Right cardiac atrium (tissue), 5 donors: ENCODE measurements at regions of chr10 and their contacts with region 1.

Region 1: GRCh38 chr10:82796510-82796909 is 921.5 kb downstream of the NRG3 start:
- DNase-seq: no peak
- ATAC-seq: no peak
- H3K4me3 ChIP-seq: no peak overlapping the region
- H3K27ac ChIP-seq: no peak overlapping the region
- H3K4me1 ChIP-seq: no peaks in the 10 kb centered on the region
- H3K27me3 ChIP-seq: no peaks in the 10 kb centered on the region

Region 2: DNA sequence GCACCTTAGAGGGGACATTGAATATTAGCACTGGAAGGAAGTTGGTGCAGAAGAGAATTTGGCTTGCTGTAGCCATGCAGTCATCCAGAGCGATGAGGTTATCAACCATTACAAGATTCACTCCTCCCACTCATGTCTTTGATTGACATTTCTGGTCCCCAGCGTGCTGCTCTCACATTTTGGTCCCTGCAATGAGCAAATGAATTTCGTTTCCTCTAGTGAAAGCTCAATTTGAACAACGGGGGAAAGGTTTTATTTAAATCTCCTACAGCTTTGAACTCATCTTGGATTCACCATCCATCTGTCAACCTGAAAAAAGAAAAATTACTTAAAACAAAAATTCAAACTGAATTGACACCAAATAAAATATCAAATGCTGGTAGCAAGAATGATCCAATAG is 53.7 kb after region 1 on chr10:
- intact Hi-C with region 1: no loop called
- DNase-seq: no peak
- ATAC-seq: no peak
- H3K4me3 ChIP-seq: no peak overlapping the region
- H3K27ac ChIP-seq: no peak overlapping the region
- H3K4me1 ChIP-seq: no peaks in the 10 kb centered on the region
- H3K27me3 ChIP-seq: no peaks in the 10 kb centered on the region

Region 3: DNA sequence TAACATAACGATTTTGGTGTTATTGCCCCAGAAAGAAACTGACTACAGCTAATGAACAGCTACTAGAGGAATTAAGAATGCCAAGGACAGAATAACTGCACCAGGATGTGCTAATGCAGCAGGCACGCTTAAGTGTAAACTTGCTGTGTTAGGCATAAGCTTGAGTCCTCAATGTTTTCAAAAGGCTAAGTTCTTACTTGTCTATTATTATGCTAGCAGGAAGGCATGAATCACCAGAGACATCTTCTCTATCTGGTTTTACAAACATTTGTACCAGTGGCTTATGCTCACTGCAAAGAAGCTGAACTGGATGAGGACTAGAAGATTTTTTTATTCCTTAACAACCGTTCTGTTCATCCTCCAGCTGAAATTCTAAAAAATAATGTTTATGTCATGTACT is 113.8 kb after region 1 on chr10:
- intact Hi-C with region 1: no loop called
- DNase-seq: no peak
- ATAC-seq: no peak
- H3K4me3 ChIP-seq: no peak overlapping the region
- H3K27ac ChIP-seq: no peak overlapping the region
- H3K4me1 ChIP-seq: no peaks in the 10 kb centered on the region
- H3K27me3 ChIP-seq: no peaks in the 10 kb centered on the region

Region 4: GRCh38 chr10:83871187-83872081 is 1074.9 kb after region 1 on chr10:
- intact Hi-C with region 1: loop called in 2 of 4 experiments (anchors 5 to 10 kb)
- DNase-seq: peak; percentile 69 to 77 (median 74)
- ATAC-seq: peak; percentile 85 to 88
- H3K4me3 ChIP-seq: no peak overlapping the region
- H3K27ac ChIP-seq: no peak overlapping the region
- H3K4me1 ChIP-seq: no peaks in the 10 kb centered on the region
- H3K27me3 ChIP-seq: no peaks in the 10 kb centered on the region